Naive thymus-derived CD4-positive, alpha-beta T cell (primary cell): ENCODE measurements at regions of chr6 and their contacts with region 1.

Region 1: GRCh38 chr6:41027799-41028628 is 11.0 kb downstream of the UNC5CL start:
- DNase-seq: peak; percentile 38 to 92 (median 73)
- ATAC-seq: peak; percentile 94
- H3K4me3 ChIP-seq: peak overlapping the region; percentile 70
- H3K4me3 Mint-ChIP-seq: peak overlapping the region; percentile 86 to 91 (median 88)
- H3K27ac ChIP-seq: peak overlapping the region; percentile 53
- H3K27ac Mint-ChIP-seq: peak overlapping the region; percentile 69 to 92 (median 87)
- H3K4me1 ChIP-seq: peaks cover 6 to 16% of the 10 kb centered on the region in 2 donors
- H3K4me1 Mint-ChIP-seq: peaks cover 17 to 25% (median 22%) of the 10 kb centered on the region in 7 donors
- H3K27me3 ChIP-seq: no peaks in the 10 kb centered on the region
- H3K27me3 Mint-ChIP-seq: no peaks in the 10 kb centered on the region

Region 2: DNA sequence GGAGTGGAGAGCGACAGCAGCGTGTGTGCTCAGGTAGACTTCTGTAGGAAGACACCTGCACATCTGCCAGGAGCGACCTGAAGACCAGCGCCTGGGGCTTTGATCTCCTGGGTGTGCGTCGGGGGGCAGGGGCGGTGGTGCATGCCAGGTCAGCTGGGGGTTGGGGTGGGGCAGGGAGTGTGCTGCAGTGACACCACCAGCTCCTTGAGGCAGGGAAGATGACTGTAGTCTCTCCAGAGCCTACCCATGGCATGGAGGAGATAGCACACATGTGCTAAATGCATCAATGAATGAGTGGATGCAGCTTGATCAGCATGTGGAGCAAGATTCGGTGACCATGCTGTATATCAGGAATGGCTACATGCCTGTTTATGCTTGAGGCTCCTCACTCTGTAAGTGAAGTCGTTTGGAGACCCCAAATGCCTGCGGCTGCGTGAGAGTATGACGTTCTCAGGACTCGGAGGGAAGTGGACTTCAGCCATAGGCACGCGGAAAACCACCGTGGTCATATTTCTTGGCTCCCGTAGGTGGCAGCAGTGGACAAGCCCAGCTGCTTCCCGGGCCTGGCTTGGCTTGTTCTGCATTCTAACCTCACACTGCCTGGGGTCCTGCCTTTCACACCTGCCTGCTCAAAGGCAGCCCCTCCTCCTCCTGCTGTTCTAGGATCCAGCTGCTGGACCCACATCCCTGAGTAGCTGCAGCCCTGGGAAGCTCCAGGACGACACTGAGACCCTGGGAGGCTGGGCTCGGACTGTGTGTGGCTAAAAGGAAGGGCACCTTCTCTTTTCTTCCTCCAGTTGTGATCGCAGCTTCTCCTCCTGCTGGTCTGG is 1666.1 kb before region 1 on chr6:
- CTCF ChIA-PET with region 1: no interaction called
- POLR2A ChIA-PET with region 1: no interaction called
- intact Hi-C with region 1: loop called (anchors 1 to 10 kb)
- DNase-seq: peak in 7 of 9 donors; percentile 20 to 49 (median 34)
- ATAC-seq: peak; percentile 80
- H3K4me3 ChIP-seq: no peak overlapping the region
- H3K4me3 Mint-ChIP-seq: peak overlapping the region in 2 of 10 donors; percentile 48 to 53
- H3K27ac ChIP-seq: no peak overlapping the region
- H3K27ac Mint-ChIP-seq: no peak overlapping the region
- H3K4me1 ChIP-seq: no peaks in the 10 kb centered on the region
- H3K4me1 Mint-ChIP-seq: peaks cover 0 to 6% (median 0%) of the 10 kb centered on the region in 7 donors
- H3K27me3 ChIP-seq: no peaks in the 10 kb centered on the region
- H3K27me3 Mint-ChIP-seq: peaks cover 0 to 19% (median 3%) of the 10 kb centered on the region in 5 donors

Region 3: GRCh38 chr6:39865011-39865888 is 1162.8 kb before region 1 on chr6:
- CTCF ChIA-PET with region 1: no interaction called
- POLR2A ChIA-PET with region 1: no interaction called
- intact Hi-C with region 1: no loop called
- DNase-seq: peak in 7 of 9 donors; percentile 2 to 65 (median 29)
- ATAC-seq: peak; percentile 52
- H3K4me3 ChIP-seq: no peak overlapping the region
- H3K4me3 Mint-ChIP-seq: no peak overlapping the region
- H3K27ac ChIP-seq: no peak overlapping the region
- H3K27ac Mint-ChIP-seq: no peak overlapping the region
- H3K4me1 ChIP-seq: no peaks in the 10 kb centered on the region
- H3K4me1 Mint-ChIP-seq: no peaks in the 10 kb centered on the region
- H3K27me3 ChIP-seq: no peaks in the 10 kb centered on the region
- H3K27me3 Mint-ChIP-seq: peaks cover 0 to 38% (median 12%) of the 10 kb centered on the region in 5 donors

Region 4: GRCh38 chr6:40328405-40328987 is 699.5 kb before region 1 on chr6:
- CTCF ChIA-PET with region 1: no interaction called
- POLR2A ChIA-PET with region 1: no interaction called
- intact Hi-C with region 1: loop called in 1 of 2 experiments (anchors 5 kb)
- DNase-seq: peak in 8 of 9 donors; percentile 3 to 73 (median 43)
- ATAC-seq: peak; percentile 70
- H3K4me3 ChIP-seq: no peak overlapping the region
- H3K4me3 Mint-ChIP-seq: peak overlapping the region in 1 of 10 donors; percentile 3
- H3K27ac ChIP-seq: no peak overlapping the region
- H3K27ac Mint-ChIP-seq: peak overlapping the region in 3 of 9 donors; percentile 9 to 36 (median 23)
- H3K4me1 ChIP-seq: peaks cover 0 to 10% of the 10 kb centered on the region in 2 donors
- H3K4me1 Mint-ChIP-seq: peaks cover 0 to 65% (median 6%) of the 10 kb centered on the region in 7 donors
- H3K27me3 ChIP-seq: no peaks in the 10 kb centered on the region
- H3K27me3 Mint-ChIP-seq: peaks cover 4 to 45% (median 13%) of the 10 kb centered on the region in 5 donors

Region 5: GRCh38 chr6:40887079-40887791 is 140.8 kb before region 1 on chr6:
- CTCF ChIA-PET with region 1: no interaction called
- POLR2A ChIA-PET with region 1: no interaction called
- intact Hi-C with region 1: no loop called
- DNase-seq: no peak
- ATAC-seq: no peak
- H3K4me3 ChIP-seq: no peak overlapping the region
- H3K4me3 Mint-ChIP-seq: no peak overlapping the region
- H3K27ac ChIP-seq: no peak overlapping the region
- H3K27ac Mint-ChIP-seq: no peak overlapping the region
- H3K4me1 ChIP-seq: no peaks in the 10 kb centered on the region
- H3K4me1 Mint-ChIP-seq: no peaks in the 10 kb centered on the region
- H3K27me3 ChIP-seq: no peaks in the 10 kb centered on the region
- H3K27me3 Mint-ChIP-seq: peaks cover 0 to 9% (median 4%) of the 10 kb centered on the region in 5 donors

Region 6: DNA sequence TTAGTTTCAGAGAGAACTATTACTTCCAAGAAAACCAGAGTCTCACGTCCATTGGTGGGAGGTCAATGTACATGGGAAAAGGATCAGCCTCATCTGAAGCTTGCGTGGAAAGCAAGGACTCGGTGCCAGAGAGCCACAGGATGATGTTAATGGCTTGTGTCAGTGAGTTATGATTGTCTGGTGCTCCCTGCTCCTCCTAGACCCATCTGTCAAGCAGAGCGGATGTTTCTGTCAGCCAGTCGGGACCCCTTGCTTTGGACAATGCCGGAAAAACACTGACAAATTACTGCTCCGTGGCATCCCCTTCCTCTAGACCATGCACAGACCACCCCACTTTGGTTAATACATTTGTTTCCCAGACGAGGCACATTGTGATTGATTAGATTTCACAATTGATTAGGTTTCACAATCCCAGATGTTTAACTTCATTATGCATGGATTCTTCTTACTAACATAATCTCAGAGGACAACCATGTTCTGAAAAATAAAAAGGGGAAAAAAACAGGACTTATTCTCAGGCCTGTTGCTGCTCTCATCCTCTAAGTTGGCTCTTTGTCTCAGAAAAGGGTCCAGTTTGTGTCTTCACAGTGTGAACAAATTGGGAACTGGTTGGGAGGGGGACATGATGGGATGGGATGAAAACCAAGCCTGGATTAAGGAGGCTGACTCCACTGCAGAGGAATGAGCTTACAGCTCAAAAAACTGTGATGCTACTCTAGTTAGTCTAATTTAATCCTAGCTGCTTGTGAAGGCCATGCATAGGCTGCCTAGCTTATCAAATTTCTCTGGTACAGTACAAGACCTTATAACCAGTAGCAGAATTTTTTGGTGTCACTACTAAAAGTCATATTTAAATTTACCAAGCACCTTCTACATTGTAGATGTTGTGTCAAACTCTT is 40.8 kb before region 1 on chr6:
- CTCF ChIA-PET with region 1: no interaction called
- POLR2A ChIA-PET with region 1: no interaction called
- intact Hi-C with region 1: no loop called
- DNase-seq: no peak
- ATAC-seq: no peak
- H3K4me3 ChIP-seq: no peak overlapping the region
- H3K4me3 Mint-ChIP-seq: no peak overlapping the region
- H3K27ac ChIP-seq: no peak overlapping the region
- H3K27ac Mint-ChIP-seq: no peak overlapping the region
- H3K4me1 ChIP-seq: no peaks in the 10 kb centered on the region
- H3K4me1 Mint-ChIP-seq: no peaks in the 10 kb centered on the region
- H3K27me3 ChIP-seq: peaks cover 0 to 4% of the 10 kb centered on the region in 2 donors
- H3K27me3 Mint-ChIP-seq: peaks cover 29 to 49% (median 40%) of the 10 kb centered on the region in 5 donors

Region 7: GRCh38 chr6:41039060-41039998 is 11.3 kb after region 1 on chr6 and contains the start of gene UNC5CL:
- CTCF ChIA-PET with region 1: interaction called, 29 read pairs
- POLR2A ChIA-PET with region 1: no interaction called
- intact Hi-C with region 1: loop called in 1 of 2 experiments (anchors 1 kb)
- DNase-seq: peak; percentile 11 to 57 (median 50)
- ATAC-seq: peak; percentile 77
- H3K4me3 ChIP-seq: no peak within 1 kb of the TSS
- H3K4me3 Mint-ChIP-seq: no peak within 1 kb of the TSS
- H3K27ac ChIP-seq: no peak within 1 kb of the TSS
- H3K27ac Mint-ChIP-seq: peak within 1 kb of the TSS in 2 of 9 donors; percentile 2 to 36
- H3K4me1 ChIP-seq: no peaks in the 10 kb centered on the region
- H3K4me1 Mint-ChIP-seq: peaks cover 0 to 20% (median 0%) of the 10 kb centered on the region in 7 donors
- H3K27me3 ChIP-seq: no peaks in the 10 kb centered on the region
- H3K27me3 Mint-ChIP-seq: no peaks in the 10 kb centered on the region
- total RNA-seq, gene UNC5CL: 2.2 to 7.2 (median 4.3) TPM

Region 8: DNA sequence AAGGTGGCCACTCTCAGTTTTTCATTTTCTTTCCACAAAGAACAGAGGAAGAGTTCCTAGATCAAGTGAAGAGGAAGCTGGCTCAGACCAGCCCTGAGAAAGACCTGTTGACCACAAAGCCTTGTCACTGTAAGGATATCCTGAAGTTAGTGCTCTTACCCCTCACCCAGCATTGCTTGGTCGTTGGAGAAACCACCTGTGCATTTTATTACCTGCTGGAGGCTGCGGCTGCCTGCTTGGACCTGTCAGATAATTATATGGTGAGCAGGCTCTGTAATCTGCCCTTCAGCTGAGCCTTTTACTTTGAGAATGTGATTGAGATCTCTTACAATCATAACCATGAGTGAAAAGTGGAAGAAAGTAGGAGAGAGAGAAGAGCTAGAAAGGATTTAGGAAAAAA is 104.2 kb after region 1 on chr6:
- CTCF ChIA-PET with region 1: no interaction called
- POLR2A ChIA-PET with region 1: no interaction called
- intact Hi-C with region 1: no loop called
- DNase-seq: no peak
- ATAC-seq: no peak
- H3K4me3 ChIP-seq: no peak overlapping the region
- H3K4me3 Mint-ChIP-seq: no peak overlapping the region
- H3K27ac ChIP-seq: no peak overlapping the region
- H3K27ac Mint-ChIP-seq: peak overlapping the region in 1 of 9 donors; percentile 36
- H3K4me1 ChIP-seq: no peaks in the 10 kb centered on the region
- H3K4me1 Mint-ChIP-seq: peaks cover 0 to 5% (median 0%) of the 10 kb centered on the region in 7 donors
- H3K27me3 ChIP-seq: no peaks in the 10 kb centered on the region
- H3K27me3 Mint-ChIP-seq: no peaks in the 10 kb centered on the region